Posterior cingulate gyrus (tissue), 11 donors: ENCODE measurements at regions of chr3 and their contacts with region 1.

Region 1: GRCh38 chr3:1147819-1148218 is 55.0 kb downstream of the CNTN6 start:
- DNase-seq: no peak

Region 2: DNA sequence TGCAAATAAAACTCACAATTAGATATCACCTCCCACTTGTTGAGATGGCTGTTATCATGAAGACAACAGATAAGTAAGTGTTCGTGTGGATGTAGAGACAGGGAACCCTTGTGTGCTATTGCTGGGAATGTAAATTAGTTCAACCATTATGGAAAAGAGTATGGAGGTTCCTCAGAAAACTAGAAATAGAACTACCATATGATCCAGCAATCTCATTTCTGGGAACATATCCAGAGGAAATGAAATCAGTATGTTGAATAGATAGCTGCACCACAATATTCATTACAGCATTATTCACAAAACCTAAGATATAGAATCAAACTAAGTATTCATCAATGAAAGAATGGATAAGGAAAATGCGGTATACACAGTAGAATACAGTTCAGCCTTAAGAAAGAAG is 473.7 kb before region 1 on chr3:
- intact Hi-C with region 1: no loop called
- DNase-seq: no peak

Region 3: GRCh38 chr3:852033-852432 is 295.8 kb before region 1 on chr3:
- intact Hi-C with region 1: no loop called
- DNase-seq: no peak

Region 4: DNA sequence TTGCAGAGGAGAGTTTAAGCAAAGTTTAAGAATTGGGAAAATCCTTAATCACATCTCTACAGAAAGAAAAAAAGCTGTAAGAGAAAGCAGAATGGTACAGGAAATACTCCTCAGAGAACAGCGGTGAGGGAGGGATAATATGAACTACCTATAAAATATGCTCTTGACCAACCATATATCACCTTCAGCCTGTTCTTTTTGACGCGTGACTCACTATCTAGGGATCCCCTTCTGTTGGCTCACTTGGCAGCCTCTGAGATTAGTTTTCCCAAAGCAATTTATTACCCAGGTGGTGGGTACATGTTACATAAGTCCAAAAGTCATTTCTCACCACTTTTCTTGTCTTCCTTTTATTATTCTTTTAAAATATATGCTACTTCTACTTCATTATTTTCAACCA is 42.8 kb after region 1 on chr3:
- intact Hi-C with region 1: loop called (anchors 1 kb)
- DNase-seq: no peak